A673 (cell line): ENCODE measurements at regions of chr13 and their contacts with region 1.

Region 1: DNA sequence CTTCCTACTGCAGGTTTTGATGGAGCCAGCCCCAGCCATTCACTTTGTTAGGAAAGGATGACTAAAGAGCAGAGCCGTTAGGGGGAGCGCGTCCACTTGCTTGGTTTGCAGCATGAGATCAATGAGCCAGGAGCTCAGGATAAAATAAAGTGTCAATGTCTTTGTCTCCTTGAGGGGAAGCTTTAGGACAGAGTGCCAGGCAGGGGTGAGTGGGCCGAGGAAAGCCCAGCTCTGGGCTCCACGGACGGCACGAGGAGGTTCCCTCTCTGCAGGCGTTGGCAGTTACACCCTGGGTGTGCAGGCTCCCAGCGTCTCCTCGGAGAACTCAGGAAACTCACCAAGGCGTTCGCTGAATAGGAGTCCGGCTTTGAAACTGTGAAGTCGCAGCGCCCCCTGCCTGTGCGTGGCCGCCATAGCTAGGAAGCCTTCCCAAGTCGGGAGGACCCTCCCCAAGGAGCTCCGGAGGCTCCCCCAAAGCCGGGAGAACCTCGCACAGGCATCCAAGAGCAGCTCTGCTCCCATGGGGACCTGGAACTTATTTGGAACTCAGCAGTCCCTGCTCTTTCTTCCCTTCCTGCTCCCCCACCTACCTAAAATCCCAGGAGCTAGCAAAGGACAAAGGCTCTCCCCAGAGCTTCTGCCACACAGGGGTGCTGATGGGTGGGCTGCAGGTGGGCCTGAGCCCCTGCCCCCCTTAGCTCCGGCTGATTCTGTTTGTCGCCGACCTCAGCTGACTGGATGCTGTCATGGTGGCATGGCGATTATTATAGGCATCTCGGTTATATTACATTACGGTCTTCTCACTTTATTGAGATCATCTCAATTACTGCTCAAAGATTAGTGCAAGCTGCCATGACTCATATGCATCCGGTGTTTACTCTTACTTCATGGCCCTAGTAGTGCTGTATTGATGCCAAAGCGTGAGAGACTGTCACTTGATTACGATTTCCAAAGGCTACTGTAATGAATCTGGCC is 34.4 kb downstream of the GSX1 start:
- DNase-seq: peak; percentile 88
- H3K4me3 ChIP-seq: no peak overlapping the region
- H3K27ac ChIP-seq: no peak overlapping the region
- H3K4me1 ChIP-seq: no peaks in the 10 kb centered on the region
- H3K27me3 ChIP-seq: peaks cover 57% of the 10 kb centered on the region
- CTCF ChIP-seq: peak; percentile 93

Region 2: GRCh38 chr13:27362064-27362883 is 464.4 kb before region 1 on chr13:
- CTCF ChIA-PET with region 1: interaction called, 28 read pairs
- POLR2A ChIA-PET with region 1: no interaction called
- intact Hi-C with region 1: loop called (anchors 5 kb)
- DNase-seq: peak; percentile 79
- H3K4me3 ChIP-seq: peak overlapping the region; percentile 29
- H3K27ac ChIP-seq: no peak overlapping the region
- H3K4me1 ChIP-seq: peaks cover 3% of the 10 kb centered on the region
- H3K27me3 ChIP-seq: peaks cover 18% of the 10 kb centered on the region
- CTCF ChIP-seq: peak; percentile 91

Region 3: DNA sequence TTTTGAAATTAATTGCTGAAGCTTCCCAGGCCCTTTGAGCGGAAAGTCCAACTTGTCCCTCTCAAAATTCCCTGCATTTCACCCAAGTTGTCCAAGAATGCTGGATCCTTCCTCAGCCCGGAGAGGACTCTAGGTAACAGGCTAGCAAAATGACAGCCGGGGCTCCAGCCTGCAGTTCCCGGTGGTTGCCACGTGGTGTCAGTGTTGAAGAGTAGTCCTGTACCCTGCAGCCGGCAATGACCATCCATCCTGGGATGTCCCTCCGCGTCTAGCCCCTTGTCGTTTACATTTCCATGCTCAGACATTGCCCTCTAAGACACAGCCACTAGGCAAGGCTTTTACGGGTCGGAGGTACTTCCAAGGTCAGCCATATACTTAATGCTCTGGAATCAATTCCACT is 344.9 kb before region 1 on chr13:
- CTCF ChIA-PET with region 1: no interaction called
- POLR2A ChIA-PET with region 1: no interaction called
- intact Hi-C with region 1: loop called (anchors 1 kb)
- DNase-seq: peak; percentile 43
- H3K4me3 ChIP-seq: no peak overlapping the region
- H3K27ac ChIP-seq: no peak overlapping the region
- H3K4me1 ChIP-seq: no peaks in the 10 kb centered on the region
- H3K27me3 ChIP-seq: no peaks in the 10 kb centered on the region
- CTCF ChIP-seq: peak; percentile 78

Region 4: GRCh38 chr13:27770809-27771208 is 55.9 kb before region 1 on chr13:
- CTCF ChIA-PET with region 1: interaction called, 8 read pairs
- POLR2A ChIA-PET with region 1: no interaction called
- intact Hi-C with region 1: loop called (anchors 2 kb)
- DNase-seq: peak; percentile 44
- H3K4me3 ChIP-seq: no peak overlapping the region
- H3K27ac ChIP-seq: no peak overlapping the region
- H3K4me1 ChIP-seq: no peaks in the 10 kb centered on the region
- H3K27me3 ChIP-seq: peaks cover 48% of the 10 kb centered on the region
- CTCF ChIP-seq: peak; percentile 59

Region 5: GRCh38 chr13:28792992-28793391 is 966.3 kb after region 1 on chr13:
- CTCF ChIA-PET with region 1: interaction called, 11 read pairs
- POLR2A ChIA-PET with region 1: no interaction called
- intact Hi-C with region 1: no loop called
- DNase-seq: no peak
- H3K4me3 ChIP-seq: no peak overlapping the region
- H3K27ac ChIP-seq: no peak overlapping the region
- H3K4me1 ChIP-seq: peaks cover 16% of the 10 kb centered on the region
- H3K27me3 ChIP-seq: no peaks in the 10 kb centered on the region
- CTCF ChIP-seq: no peak